Heart left ventricle (tissue), 16 donors: ENCODE measurements at regions of chr11 and their contacts with region 1.

Region 1: GRCh38 chr11:13183094-13183825 is 94.3 kb upstream of the BMAL1 start:
- DNase-seq: no peak
- ATAC-seq: peak in 2 of 4 donors; percentile 36 to 63
- H3K4me3 ChIP-seq: peak overlapping the region in 8 of 12 donors; percentile 5 to 40 (median 20)
- H3K27ac ChIP-seq: no peak overlapping the region
- H3K4me1 ChIP-seq: peaks cover 0 to 8% (median 4%) of the 10 kb centered on the region in 12 donors
- H3K27me3 ChIP-seq: no peaks in the 10 kb centered on the region
- CTCF ChIP-seq: peak in 11 of 12 donors; percentile 20 to 62 (median 44)
- POLR2A ChIP-seq: no peak

Region 2: DNA sequence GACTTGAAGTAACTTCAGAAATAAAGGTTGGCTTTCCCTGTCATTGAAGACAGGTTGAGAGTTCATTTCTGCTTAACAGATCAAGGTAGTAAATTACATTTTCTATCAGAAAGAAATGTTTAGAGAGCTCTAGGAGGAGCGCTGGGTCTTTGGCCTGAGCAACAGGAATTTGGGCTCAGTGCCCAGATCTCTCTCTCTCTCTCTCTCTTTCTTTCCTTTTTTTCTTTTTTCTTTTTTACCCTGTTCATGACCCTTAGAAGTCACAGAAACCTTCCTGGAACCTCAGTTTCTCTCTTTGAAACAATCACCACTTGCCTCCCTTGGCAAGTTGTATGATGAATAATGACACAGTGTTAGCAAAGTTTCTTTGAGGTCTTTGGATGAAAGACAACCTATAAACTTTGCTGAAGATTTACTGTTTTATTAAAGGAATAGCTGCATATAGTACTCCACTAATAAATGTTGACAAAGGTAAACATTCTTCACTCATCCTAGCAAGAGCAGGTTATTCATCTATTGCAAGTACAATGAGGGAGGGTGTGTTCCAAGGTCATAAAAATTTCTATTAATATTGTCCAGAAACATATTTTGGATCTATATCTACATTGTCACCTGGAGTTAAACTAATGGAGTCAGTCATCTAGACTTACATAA is 209.6 kb before region 1 on chr11:
- intact Hi-C with region 1: loop called in 4 of 10 experiments (anchors 5 to 10 kb)
- DNase-seq: no peak
- ATAC-seq: no peak
- H3K4me3 ChIP-seq: no peak overlapping the region
- H3K27ac ChIP-seq: no peak overlapping the region
- H3K4me1 ChIP-seq: no peaks in the 10 kb centered on the region
- H3K27me3 ChIP-seq: no peaks in the 10 kb centered on the region
- CTCF ChIP-seq: no peak
- POLR2A ChIP-seq: no peak

Region 3: GRCh38 chr11:13276832-13277767 is 93.8 kb after region 1 on chr11:
- intact Hi-C with region 1: no loop called
- DNase-seq: peak; percentile 98 to 99 (median 99)
- ATAC-seq: peak; percentile 95 to 98 (median 98)
- H3K4me3 ChIP-seq: peak overlapping the region; percentile 84 to 99 (median 96)
- H3K27ac ChIP-seq: peak overlapping the region; percentile 37 to 95 (median 90)
- H3K4me1 ChIP-seq: peaks cover 0 to 33% (median 19%) of the 10 kb centered on the region in 12 donors
- H3K27me3 ChIP-seq: peaks cover 0 to 11% (median 0%) of the 10 kb centered on the region in 9 donors
- CTCF ChIP-seq: peak in 1 of 12 donors; percentile 6
- POLR2A ChIP-seq: peak; percentile 67 to 77

Region 4: DNA sequence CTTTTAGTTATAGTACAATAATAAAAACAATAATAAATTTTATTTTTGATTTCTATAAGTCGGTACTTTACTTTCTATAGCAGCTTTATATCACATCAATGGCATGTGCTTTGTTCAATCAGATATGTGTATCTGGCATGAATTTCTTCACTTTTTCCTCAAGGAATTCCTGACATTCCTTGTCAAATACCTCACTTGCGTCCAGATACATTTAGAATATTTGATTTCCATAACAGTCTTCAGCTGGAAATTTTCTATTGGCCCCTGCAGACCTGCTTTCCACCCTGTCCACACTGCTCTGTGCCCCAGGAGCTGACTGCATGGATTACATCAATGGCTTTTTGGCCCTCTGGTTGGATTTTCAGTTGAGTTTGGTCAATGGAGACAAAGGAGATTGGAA is 578.5 kb after region 1 on chr11:
- intact Hi-C with region 1: no loop called
- DNase-seq: no peak
- ATAC-seq: no peak
- H3K4me3 ChIP-seq: no peak overlapping the region
- H3K27ac ChIP-seq: no peak overlapping the region
- H3K4me1 ChIP-seq: peaks cover 0 to 9% (median 0%) of the 10 kb centered on the region in 12 donors
- H3K27me3 ChIP-seq: no peaks in the 10 kb centered on the region
- CTCF ChIP-seq: no peak
- POLR2A ChIP-seq: no peak